ENCODE measurements at regions of chrX and their contacts with region 1.

Region 1: DNA sequence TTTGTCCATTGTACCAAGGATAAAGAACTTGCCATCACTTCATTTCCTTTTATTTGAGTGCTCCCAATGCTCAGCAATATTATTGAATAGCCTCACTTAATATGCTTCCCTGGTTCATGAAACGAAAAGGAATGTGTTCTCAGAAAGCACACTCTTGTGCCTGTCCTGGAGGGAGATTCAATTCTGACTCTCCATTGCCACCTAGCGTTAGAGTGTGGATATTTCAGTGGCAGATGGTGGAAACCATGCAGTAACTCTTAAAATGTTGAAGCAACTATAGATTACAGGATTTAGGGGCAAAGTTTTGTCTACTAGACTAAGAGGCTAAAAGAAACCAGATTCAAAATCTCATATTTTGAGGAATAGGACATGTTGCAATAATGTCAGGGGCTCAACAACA is 36.0 kb downstream of the GAB3 start:
- DNase-seq: peak; percentile 42
- H3K4me3 Mint-ChIP-seq: no peak overlapping the region
- H3K27ac Mint-ChIP-seq: no peak overlapping the region
- H3K4me1 Mint-ChIP-seq: peaks cover 55% of the 10 kb centered on the region
- H3K27me3 Mint-ChIP-seq: no peaks in the 10 kb centered on the region

Region 2: GRCh38 chrX:154695911-154696675 is 18.8 kb before region 1 on chrX:
- CTCF ChIA-PET with region 1: interaction called, 6 read pairs
- POLR2A ChIA-PET with region 1: interaction called, 6 read pairs
- intact Hi-C with region 1: loop called (anchors 1 kb)
- DNase-seq: peak; percentile 34
- H3K4me3 Mint-ChIP-seq: no peak overlapping the region
- H3K27ac Mint-ChIP-seq: peak overlapping the region; percentile 51
- H3K4me1 Mint-ChIP-seq: peaks cover 13% of the 10 kb centered on the region
- H3K27me3 Mint-ChIP-seq: no peaks in the 10 kb centered on the region

Region 3: GRCh38 chrX:154734061-154734781 is 19.3 kb after region 1 on chrX:
- CTCF ChIA-PET with region 1: interaction called, 6 read pairs
- POLR2A ChIA-PET with region 1: interaction called, 5 read pairs
- intact Hi-C with region 1: loop called (anchors 2 kb)
- DNase-seq: peak; percentile 28
- H3K4me3 Mint-ChIP-seq: peak overlapping the region; percentile 65
- H3K27ac Mint-ChIP-seq: peak overlapping the region; percentile 94
- H3K4me1 Mint-ChIP-seq: peaks cover 87% of the 10 kb centered on the region
- H3K27me3 Mint-ChIP-seq: no peaks in the 10 kb centered on the region